Prostate gland (tissue), 2 donors: ENCODE measurements at regions of chr17 and their contacts with region 1.

Region 1: GRCh38 chr17:81871387-81872230 is 472 bp upstream of the ARHGDIA start:
- DNase-seq: peak; percentile 90
- H3K4me3 ChIP-seq: peak overlapping the region; percentile 69 to 95
- H3K27ac ChIP-seq: peak overlapping the region; percentile 90 to 96
- H3K4me1 ChIP-seq: peaks cover 21% of the 10 kb centered on the region
- H3K27me3 ChIP-seq: no peaks in the 10 kb centered on the region
- CTCF ChIP-seq: peak; percentile 26 to 65 (median 58)
- POLR2A ChIP-seq: peak; percentile 93

Region 2: GRCh38 chr17:81860756-81861518 is 10.7 kb before region 1 on chr17:
- intact Hi-C with region 1: loop called (anchors 1 kb)
- DNase-seq: peak; percentile 100
- H3K4me3 ChIP-seq: peak overlapping the region; percentile 62 to 76
- H3K27ac ChIP-seq: peak overlapping the region; percentile 91
- H3K4me1 ChIP-seq: peaks cover 16% of the 10 kb centered on the region
- H3K27me3 ChIP-seq: no peaks in the 10 kb centered on the region
- CTCF ChIP-seq: peak in 2 of 4 experiments; percentile 22 to 54
- POLR2A ChIP-seq: peak; percentile 96